CD4-positive, alpha-beta T cell (primary cell): ENCODE measurements at regions of chr7 and their contacts with region 1.

Region 1: DNA sequence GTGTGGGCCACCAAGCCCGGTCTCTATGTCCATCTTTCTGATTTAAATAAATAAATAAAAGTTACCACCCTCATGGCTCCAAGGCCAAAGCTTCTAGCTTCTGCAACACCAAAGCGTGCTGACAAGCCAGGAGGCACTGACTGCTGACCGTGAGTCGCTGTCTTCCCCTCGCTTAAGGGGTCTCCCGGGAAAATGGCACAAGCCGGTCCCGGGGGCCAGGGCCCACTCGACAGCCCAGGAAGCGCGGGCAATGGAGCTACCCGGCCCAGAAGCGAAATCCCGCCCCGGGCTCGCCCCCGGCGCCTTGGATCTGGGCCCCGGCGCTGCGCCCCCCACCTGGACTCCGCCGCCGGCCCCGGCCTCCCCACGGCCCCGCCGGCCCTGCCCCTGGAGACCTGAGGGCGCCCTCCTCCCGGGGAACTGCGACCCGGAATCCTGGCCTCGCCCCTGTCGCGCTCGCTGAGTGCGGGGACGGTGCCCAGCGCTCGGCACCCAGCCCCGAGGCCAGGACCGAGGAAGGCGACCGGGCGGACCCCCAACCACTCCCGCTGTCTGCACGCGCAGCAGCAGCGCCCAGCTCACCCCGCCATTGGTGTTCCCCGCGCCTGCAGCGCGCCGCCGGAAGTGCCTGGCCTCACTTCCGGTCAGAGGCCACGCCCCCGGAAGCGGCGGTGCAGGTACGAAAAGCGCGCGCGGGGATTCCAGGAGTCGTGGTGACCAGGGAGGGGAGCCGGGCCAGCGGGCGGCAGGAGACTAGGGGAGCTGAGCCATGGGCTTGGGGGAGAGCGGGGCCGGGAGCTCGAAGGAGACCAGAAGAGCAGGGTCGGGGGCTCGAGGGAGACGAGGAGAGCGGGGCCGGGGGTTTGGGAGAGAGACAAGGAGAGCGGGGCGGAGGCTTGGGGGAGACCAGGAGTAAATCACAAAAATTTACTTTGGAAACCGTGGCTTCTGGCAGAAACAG is at the starts of genes MRM2 and NUDT1:
- DNase-seq: peak; percentile 19 to 80 (median 59)
- ATAC-seq: peak; percentile 54
- H3K4me3 ChIP-seq: peak within 1 kb of the TSS; percentile 94
- H3K4me3 Mint-ChIP-seq: peak within 1 kb of the TSS; percentile 95
- H3K27ac ChIP-seq: peak within 1 kb of the TSS; percentile 28 to 46
- H3K27ac Mint-ChIP-seq: peak within 1 kb of the TSS; percentile 88
- H3K4me1 ChIP-seq: peaks cover 26% of the 10 kb centered on the region
- H3K4me1 Mint-ChIP-seq: peaks cover 17% of the 10 kb centered on the region
- H3K27me3 ChIP-seq: no peaks in the 10 kb centered on the region
- H3K27me3 Mint-ChIP-seq: no peaks in the 10 kb centered on the region
- CTCF ChIP-seq: no peak
- total RNA-seq, gene MRM2: 3.6 to 3.7 TPM
- total RNA-seq, gene NUDT1: 12.8 to 13.0 TPM

Region 2: DNA sequence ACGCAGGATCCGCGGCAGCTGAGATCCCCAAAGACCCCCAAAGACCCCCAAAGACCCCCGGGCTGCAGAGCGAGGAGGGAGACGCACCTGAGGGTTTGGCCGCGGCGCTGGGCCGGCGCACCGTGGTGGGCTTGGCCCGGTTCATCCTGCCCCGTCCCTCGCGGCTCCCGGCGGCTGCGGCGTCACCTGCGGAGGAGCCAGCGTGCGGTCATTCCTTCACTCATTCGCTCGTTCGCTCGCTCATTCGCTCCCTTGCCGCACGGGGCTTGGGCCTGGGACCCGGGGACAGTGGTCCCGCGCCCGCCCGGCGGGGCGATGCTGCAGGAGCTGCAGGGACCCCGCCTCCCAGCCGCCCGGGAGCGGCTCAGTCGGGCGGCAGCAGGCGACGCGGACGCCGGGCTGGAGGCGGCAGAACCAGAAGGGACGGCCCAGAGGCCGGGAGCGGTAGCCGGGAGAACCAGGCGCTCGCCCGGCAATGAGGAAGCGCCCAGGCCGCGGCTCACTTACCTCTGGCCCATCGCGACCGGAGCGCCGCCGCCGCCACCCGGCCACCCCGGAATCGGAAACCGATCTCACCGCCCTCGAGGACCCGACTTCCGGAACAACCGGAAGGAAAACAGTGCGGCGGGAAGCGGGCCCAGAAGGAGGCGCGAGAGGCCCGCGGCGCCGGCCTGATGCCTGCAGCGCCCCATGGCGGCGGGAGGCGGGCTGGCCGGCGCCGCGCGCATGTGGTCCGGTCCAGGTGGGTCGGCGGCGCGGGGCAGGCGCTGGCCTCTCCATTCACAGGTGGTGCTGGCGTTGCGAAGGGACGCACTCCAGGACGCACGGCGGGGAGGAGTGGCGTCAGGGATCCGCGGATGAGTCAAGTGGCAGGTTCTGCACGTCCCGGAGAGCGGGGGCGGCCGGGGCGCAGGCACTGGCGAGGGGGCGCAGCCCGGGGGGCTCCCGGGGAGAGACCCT is 737.8 kb before region 1 on chr7 and contains the start of gene INTS1:
- CTCF ChIA-PET with region 1: no interaction called
- POLR2A ChIA-PET with region 1: no interaction called
- intact Hi-C with region 1: loop called in 1 of 2 experiments (anchors 10 kb)
- DNase-seq: peak; percentile 82 to 94 (median 87)
- ATAC-seq: peak; percentile 83
- H3K4me3 ChIP-seq: peak within 1 kb of the TSS; percentile 74
- H3K4me3 Mint-ChIP-seq: peak within 1 kb of the TSS; percentile 90
- H3K27ac ChIP-seq: peak within 1 kb of the TSS in 1 of 2 donors; percentile 29
- H3K27ac Mint-ChIP-seq: peak within 1 kb of the TSS; percentile 71
- H3K4me1 ChIP-seq: peaks cover 60% of the 10 kb centered on the region
- H3K4me1 Mint-ChIP-seq: peaks cover 31% of the 10 kb centered on the region
- H3K27me3 ChIP-seq: no peaks in the 10 kb centered on the region
- H3K27me3 Mint-ChIP-seq: peaks cover 4% of the 10 kb centered on the region
- CTCF ChIP-seq: peak; percentile 87
- total RNA-seq, gene INTS1: 91.0 to 91.5 TPM

Region 3: GRCh38 chr7:2266908-2267307 is 25.0 kb after region 1 on chr7:
- CTCF ChIA-PET with region 1: no interaction called
- POLR2A ChIA-PET with region 1: no interaction called
- intact Hi-C with region 1: no loop called
- DNase-seq: no peak
- ATAC-seq: no peak
- H3K4me3 ChIP-seq: no peak overlapping the region
- H3K4me3 Mint-ChIP-seq: no peak overlapping the region
- H3K27ac ChIP-seq: no peak overlapping the region
- H3K27ac Mint-ChIP-seq: no peak overlapping the region
- H3K4me1 ChIP-seq: peaks cover 2% of the 10 kb centered on the region
- H3K4me1 Mint-ChIP-seq: peaks cover 1% of the 10 kb centered on the region
- H3K27me3 ChIP-seq: no peaks in the 10 kb centered on the region
- H3K27me3 Mint-ChIP-seq: no peaks in the 10 kb centered on the region
- CTCF ChIP-seq: no peak

Region 4: DNA sequence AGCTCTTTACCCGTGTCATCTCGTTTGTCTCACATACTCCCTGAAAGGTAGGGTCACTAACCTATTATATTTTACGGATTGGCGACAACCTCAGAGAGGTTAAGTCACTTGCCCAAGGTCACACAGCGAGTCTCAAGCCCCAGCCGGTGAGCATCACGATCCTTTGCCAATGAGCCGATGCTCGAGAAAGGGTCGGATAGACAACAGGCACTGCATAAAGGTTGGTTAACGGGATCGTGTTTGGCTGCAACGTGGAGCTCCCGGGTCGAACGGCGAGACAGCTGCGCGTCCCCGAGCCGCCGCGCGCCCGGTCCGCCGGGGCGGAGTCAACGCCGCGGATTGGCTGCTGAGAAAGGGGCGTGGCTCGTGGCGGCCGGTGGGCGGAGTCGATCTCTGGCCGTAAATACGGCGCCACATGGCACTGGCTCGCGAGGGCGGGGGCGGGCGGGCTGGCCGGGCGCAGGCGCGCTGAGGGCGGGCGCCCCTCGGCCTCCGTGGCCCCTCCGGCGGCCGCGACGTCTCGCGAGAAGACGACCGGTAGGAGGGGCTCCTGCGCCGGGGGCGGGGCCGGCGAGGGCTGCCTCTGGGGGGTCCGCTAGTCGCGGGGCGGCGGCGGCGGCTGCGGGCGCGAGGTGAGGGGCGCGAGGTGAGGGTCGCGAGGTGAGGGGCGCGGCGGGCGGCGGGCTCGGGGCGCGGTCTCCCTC is 161.3 kb after region 1 on chr7 and contains the start of gene CHST12:
- CTCF ChIA-PET with region 1: no interaction called
- POLR2A ChIA-PET with region 1: no interaction called
- intact Hi-C with region 1: loop called in 1 of 2 experiments (anchors 5 kb)
- DNase-seq: peak; percentile 90 to 99 (median 93)
- ATAC-seq: peak; percentile 76
- H3K4me3 ChIP-seq: peak within 1 kb of the TSS; percentile 76
- H3K4me3 Mint-ChIP-seq: peak within 1 kb of the TSS; percentile 88
- H3K27ac ChIP-seq: peak within 1 kb of the TSS; percentile 35 to 38
- H3K27ac Mint-ChIP-seq: peak within 1 kb of the TSS; percentile 82
- H3K4me1 ChIP-seq: peaks cover 57% of the 10 kb centered on the region
- H3K4me1 Mint-ChIP-seq: peaks cover 54% of the 10 kb centered on the region
- H3K27me3 ChIP-seq: no peaks in the 10 kb centered on the region
- H3K27me3 Mint-ChIP-seq: no peaks in the 10 kb centered on the region
- CTCF ChIP-seq: no peak
- total RNA-seq, gene CHST12: 6.6 to 8.6 TPM